ENCODE measurements at regions of chr10 and their contacts with region 1.

Region 1: DNA sequence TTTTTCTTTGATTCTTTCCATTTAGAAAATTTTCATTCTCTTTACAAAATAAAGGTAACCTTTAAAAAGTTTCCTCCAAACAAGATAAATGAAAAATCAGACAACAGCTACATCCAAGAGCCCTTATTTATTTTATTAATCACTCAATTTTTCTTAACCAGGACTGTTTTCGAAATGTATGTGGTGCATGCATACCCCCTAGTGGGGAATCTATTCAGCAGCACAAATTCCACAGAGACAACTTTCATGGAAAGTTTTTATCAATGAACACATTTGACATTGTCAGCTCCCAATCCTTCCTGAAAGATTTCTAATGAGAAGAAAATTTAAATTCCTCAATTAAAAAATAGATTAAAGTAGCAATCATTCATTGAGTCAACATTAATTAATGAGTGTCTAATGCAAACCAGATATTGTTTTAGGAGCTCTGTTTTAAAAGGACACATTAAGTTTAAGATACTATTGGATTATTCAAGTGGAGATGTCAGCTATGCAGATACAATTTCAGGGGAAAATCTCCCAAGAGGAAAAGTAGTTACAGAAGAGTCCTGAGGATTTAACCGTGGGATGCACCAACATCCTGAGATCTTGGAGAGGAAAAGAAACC is 5.2 kb upstream of the HTR7 start:
- DNase-seq: no peak
- ATAC-seq: no peak

Region 2: GRCh38 chr10:89793649-89794254 is 1069.3 kb before region 1 on chr10:
- intact Hi-C with region 1: loop called (anchors 10 kb)
- DNase-seq: no peak
- ATAC-seq: peak; percentile 64

Region 3: GRCh38 chr10:90579602-90580242 is 283.3 kb before region 1 on chr10:
- intact Hi-C with region 1: no loop called
- DNase-seq: no peak
- ATAC-seq: no peak

Region 4: GRCh38 chr10:90751107-90751997 is 111.7 kb before region 1 on chr10:
- intact Hi-C with region 1: loop called (anchors 10 kb)
- DNase-seq: no peak
- ATAC-seq: peak; percentile 51

Measured in left ventricle myocardium superior (tissue), 1 donor.